IMR-90 (cell line): ENCODE measurements at regions of chr10 and their contacts with region 1.

Region 1: DNA sequence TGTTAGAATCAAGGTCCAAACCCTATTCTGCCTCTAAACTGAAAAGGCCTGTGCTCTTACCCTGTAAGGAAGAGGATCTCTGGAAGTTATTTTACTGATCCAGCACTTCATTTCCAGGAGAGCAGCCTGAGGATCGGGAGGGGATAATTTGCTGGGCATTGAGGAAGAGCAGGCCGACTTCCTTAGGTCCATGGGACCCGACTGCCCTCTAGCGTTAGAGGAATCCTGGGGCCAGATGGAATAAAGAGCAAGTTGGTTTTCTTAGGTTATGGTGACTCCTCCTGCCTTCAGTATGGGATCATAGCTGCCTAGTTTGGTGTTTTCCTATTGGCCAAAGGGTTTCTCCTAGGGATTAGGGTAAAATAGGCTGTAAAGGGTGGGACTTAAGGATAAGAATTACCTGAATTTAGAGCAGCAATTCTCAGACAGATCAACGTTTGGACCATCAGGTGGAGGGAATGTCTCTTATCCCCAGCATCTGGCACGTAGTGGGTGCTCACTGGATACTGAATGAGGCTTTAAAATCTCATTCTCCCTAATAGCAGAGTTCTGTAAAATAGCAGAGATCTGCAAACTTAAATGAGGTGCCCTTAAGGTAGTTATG is 40.0 kb upstream of the SORBS1 start:
- DNase-seq: peak; percentile 84
- ATAC-seq: peak; percentile 96
- H3K4me3 ChIP-seq: no peak overlapping the region
- H3K27ac ChIP-seq: no peak overlapping the region
- H3K4me1 ChIP-seq: no peaks in the 10 kb centered on the region
- H3K27me3 ChIP-seq: peaks cover 2% of the 10 kb centered on the region; the same call in 1 of the 2 replicates
- CTCF ChIP-seq: peak; percentile 96
- POLR2A ChIP-seq: peak; percentile 52; the same call in 1 of the 2 replicates
- RAD21 ChIP-seq: peak; percentile 97

Region 2: DNA sequence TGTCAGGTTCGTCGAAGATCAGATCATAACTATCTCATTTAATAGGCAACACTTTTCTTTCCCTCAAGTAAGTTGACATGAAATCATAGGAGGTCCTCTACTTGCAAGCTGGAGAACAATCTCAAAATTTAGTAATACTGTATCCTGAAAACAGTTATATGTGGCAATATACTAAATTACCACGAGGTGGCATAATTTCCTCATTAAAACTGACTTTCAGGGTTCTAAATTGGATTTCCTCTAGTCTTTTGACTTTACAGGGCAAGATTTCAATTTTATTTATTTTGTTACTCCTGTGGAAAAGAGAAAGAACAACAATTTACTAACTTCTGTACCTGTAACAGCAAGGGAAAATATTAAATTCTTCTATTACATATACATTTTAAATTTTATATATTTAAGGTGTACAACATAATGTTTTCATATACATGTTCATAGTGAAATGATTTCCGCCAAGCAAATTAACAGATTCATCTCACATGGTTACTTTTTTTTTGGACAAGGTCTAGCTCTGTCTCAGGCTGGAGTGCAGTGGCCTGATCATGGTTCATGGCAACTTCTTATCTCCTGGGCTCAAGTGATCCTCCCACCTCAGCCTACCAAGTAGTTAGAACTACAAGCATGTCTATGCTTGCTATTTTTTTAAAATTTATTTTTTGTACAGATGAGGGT is 971.1 kb before region 1 on chr10:
- CTCF ChIA-PET with region 1: no interaction called
- POLR2A ChIA-PET with region 1: no interaction called
- dilution Hi-C with region 1: no loop called
- in situ Hi-C with region 1: loop called (anchors 10 kb)
- intact Hi-C with region 1: loop called (anchors 1 kb)
- DNase-seq: peak; percentile 12
- ATAC-seq: no peak
- H3K4me3 ChIP-seq: no peak overlapping the region
- H3K27ac ChIP-seq: no peak overlapping the region
- H3K4me1 ChIP-seq: no peaks in the 10 kb centered on the region
- H3K27me3 ChIP-seq: no peaks in the 10 kb centered on the region
- CTCF ChIP-seq: peak; percentile 59
- POLR2A ChIP-seq: no peak
- RAD21 ChIP-seq: peak; percentile 47

Region 3: DNA sequence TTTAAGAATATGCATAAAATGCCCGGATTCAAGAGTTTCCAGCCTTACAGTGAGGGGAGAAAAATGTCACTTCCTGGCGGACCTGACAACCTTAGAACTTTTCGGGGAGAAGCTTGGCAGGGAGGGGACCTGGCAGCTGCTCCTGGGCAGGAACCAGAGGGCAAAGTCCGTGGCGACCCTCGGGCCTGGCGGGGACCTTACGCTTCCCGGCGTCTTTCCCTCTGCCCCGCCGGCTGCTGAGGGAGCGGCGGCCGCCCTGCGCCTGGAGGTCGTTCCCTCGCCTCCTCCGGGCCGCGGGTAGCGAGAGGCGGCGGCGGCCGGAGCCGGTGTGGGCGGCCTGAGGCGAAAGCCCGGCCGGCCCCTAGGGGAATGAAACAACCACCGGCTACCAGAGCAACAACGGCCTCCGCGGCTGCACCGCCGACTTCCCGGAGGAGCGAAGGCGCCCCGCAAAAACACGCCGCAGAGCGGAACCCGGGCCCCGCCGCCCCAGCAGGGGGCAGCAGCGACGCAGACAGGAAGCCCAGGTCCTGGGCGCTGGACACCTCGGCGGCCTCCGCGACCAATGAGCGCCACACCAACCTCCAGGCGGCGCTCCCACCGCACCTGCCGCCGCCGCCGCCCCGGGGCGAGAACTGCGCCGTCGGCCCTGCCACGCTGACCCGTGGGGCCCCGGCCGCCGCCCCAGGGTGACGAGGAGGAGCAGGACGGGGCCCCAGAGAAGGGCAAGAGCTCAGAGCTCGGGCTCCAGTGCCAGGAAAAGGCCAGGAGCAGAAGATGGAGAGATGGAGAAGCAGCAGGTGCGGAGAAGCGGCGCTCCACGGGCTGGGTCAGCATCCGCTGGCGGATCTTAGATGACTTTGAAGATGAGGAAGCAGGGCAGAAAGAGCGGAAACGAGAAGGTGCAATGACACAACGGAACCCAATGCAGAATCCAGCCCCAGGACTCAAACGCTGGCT is 417.7 kb before region 1 on chr10:
- CTCF ChIA-PET with region 1: no interaction called
- POLR2A ChIA-PET with region 1: no interaction called
- dilution Hi-C with region 1: no loop called
- in situ Hi-C with region 1: no loop called
- intact Hi-C with region 1: loop called (anchors 5 kb)
- DNase-seq: peak; percentile 71
- ATAC-seq: peak; percentile 98
- H3K4me3 ChIP-seq: peak overlapping the region; percentile 65
- H3K27ac ChIP-seq: peak overlapping the region; percentile 48; the same call in 1 of the 2 replicates
- H3K4me1 ChIP-seq: no peaks in the 10 kb centered on the region
- H3K27me3 ChIP-seq: peaks cover 2% of the 10 kb centered on the region
- CTCF ChIP-seq: peak; percentile 94
- POLR2A ChIP-seq: no peak
- RAD21 ChIP-seq: peak; percentile 76

Region 4: DNA sequence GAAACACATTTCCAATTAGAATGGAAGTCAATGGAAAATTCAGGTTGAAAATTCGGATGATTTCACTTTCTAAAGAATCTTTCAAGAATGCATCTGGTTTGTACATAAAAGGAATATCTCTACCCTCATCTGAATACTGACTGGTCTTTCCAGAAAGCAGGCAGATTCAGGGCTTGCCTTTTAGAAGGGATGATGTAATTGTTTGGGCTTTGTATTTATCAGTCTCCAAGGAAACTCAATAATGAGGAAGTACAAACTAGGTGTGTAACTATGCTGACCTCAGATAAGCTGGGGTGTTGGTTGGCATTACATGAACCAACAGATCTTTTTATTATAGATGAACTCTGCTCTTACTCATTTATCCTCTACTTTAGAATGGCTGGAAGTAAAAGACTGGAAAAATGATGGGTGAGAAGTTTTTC is 334.5 kb before region 1 on chr10:
- CTCF ChIA-PET with region 1: no interaction called
- POLR2A ChIA-PET with region 1: interaction called, 12 read pairs
- dilution Hi-C with region 1: no loop called
- in situ Hi-C with region 1: no loop called
- intact Hi-C with region 1: no loop called
- DNase-seq: peak; percentile 88
- ATAC-seq: peak; percentile 63
- H3K4me3 ChIP-seq: no peak overlapping the region
- H3K27ac ChIP-seq: peak overlapping the region; percentile 52; the same call in 1 of the 2 replicates
- H3K4me1 ChIP-seq: peaks cover 19% of the 10 kb centered on the region
- H3K27me3 ChIP-seq: no peaks in the 10 kb centered on the region
- CTCF ChIP-seq: no peak
- POLR2A ChIP-seq: no peak
- RAD21 ChIP-seq: no peak

Region 5: GRCh38 chr10:95374597-95375209 is 226.5 kb before region 1 on chr10:
- CTCF ChIA-PET with region 1: interaction called, 6 read pairs
- POLR2A ChIA-PET with region 1: no interaction called
- dilution Hi-C with region 1: no loop called
- in situ Hi-C with region 1: no loop called
- intact Hi-C with region 1: loop called (anchors 2 kb)
- DNase-seq: peak; percentile 57
- ATAC-seq: peak; percentile 84; the same call in 1 of the 2 replicates
- H3K4me3 ChIP-seq: no peak overlapping the region
- H3K27ac ChIP-seq: no peak overlapping the region
- H3K4me1 ChIP-seq: no peaks in the 10 kb centered on the region
- H3K27me3 ChIP-seq: peaks cover 30% of the 10 kb centered on the region
- CTCF ChIP-seq: peak; percentile 63
- POLR2A ChIP-seq: no peak
- RAD21 ChIP-seq: peak; percentile 67

Region 6: GRCh38 chr10:95430231-95430951 is 170.8 kb before region 1 on chr10:
- CTCF ChIA-PET with region 1: interaction called, 7 read pairs
- POLR2A ChIA-PET with region 1: no interaction called
- dilution Hi-C with region 1: no loop called
- in situ Hi-C with region 1: loop called (anchors 5 kb)
- intact Hi-C with region 1: loop called (anchors 1 kb)
- DNase-seq: peak; percentile 44
- ATAC-seq: peak; percentile 91
- H3K4me3 ChIP-seq: no peak overlapping the region
- H3K27ac ChIP-seq: no peak overlapping the region
- H3K4me1 ChIP-seq: no peaks in the 10 kb centered on the region
- H3K27me3 ChIP-seq: peaks cover 15% of the 10 kb centered on the region
- CTCF ChIP-seq: peak; percentile 90
- POLR2A ChIP-seq: no peak
- RAD21 ChIP-seq: peak; percentile 87